Activated CD4-positive, alpha-beta memory T cell treated with anti-CD3 and anti-CD28 coated beads, Interleukin-2, amount 10 ng/mL, durations not matched to agents 7 days and 5 days (primary cell): ENCODE measurements at regions of chr5 and their contacts with region 1.

Region 1: DNA sequence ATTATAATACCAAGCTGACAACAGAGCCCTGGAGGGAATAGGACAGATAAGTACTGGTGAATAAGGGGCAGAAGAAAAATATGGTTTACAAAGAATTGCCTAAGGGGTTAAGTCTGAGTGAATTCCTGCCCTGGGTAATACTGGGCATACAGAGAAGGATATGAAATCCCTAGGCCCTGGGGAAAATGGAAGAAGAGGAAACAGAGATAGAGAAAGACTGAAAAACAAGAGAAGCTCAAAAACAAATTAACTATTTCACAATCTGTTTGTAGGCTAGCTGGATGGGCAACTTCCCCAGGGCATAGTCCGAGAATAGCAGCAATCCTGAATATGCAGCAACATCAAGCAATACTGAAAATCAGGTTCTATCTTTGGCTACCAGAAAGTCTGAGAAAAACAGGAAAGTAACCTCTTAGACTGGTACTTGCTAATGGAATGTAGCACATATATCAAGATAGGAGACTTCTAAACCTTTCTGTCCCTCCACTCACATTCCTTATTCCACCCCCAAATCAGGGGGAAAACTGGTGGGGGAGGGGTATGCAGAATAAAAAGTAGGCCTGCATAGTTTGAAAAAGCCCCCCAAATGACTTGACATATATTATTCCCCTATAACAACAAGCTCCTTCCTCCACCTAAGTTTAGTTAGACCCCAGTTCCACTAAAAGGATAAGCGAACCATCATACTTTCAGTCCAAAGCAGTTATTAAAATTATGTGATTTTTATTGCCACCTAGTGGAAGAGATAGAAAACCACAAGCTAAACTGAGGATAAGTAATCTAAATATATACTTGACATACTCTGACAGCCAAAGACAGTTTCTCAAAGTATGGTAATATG is 20.6 kb downstream of the SLC38A9 start:
- DNase-seq: no peak
- H3K4me3 Mint-ChIP-seq: no peak overlapping the region
- H3K27ac Mint-ChIP-seq: no peak overlapping the region
- H3K4me1 Mint-ChIP-seq: peaks cover 2% of the 10 kb centered on the region
- H3K27me3 Mint-ChIP-seq: no peaks in the 10 kb centered on the region

Region 2: DNA sequence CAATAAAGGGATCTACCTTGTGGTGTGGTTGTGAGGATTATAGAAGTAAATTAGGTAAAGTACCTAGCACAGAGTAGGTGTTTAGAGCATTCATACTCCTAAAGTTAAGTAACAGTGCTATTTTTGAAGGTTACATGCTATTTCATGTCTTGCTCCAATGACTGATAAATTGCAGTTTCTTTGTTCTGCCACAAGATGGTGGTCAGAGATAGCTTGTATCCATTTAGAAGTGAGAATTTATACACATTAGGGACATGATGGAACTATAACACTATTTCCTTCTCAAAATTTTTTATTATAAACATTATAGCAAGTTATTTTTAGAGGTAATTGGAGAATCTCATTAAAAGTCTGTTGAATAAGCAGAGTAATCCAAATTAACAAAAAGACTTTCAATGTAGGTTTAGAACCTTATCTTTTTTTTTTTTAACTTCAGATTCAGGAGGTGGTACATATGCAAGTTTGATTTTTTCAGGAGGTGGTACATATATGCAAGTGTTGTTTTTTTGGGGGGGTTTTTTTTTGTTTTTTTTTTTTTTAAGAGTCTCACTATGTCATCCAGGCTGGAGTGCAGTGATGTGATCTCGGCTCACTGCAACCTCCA is 366.6 kb before region 1 on chr5:
- CTCF ChIA-PET with region 1: interaction called, 11 read pairs
- POLR2A ChIA-PET with region 1: no interaction called
- DNase-seq: no peak
- H3K4me3 Mint-ChIP-seq: no peak overlapping the region
- H3K27ac Mint-ChIP-seq: peak overlapping the region; percentile 17
- H3K4me1 Mint-ChIP-seq: peaks cover 18% of the 10 kb centered on the region
- H3K27me3 Mint-ChIP-seq: no peaks in the 10 kb centered on the region

Region 3: GRCh38 chr5:55344392-55344992 is 347.0 kb before region 1 on chr5:
- CTCF ChIA-PET with region 1: interaction called, 18 read pairs
- POLR2A ChIA-PET with region 1: no interaction called
- DNase-seq: peak; percentile 69
- H3K4me3 Mint-ChIP-seq: no peak overlapping the region
- H3K27ac Mint-ChIP-seq: peak overlapping the region; percentile 32
- H3K4me1 Mint-ChIP-seq: peaks cover 6% of the 10 kb centered on the region
- H3K27me3 Mint-ChIP-seq: no peaks in the 10 kb centered on the region

Region 4: DNA sequence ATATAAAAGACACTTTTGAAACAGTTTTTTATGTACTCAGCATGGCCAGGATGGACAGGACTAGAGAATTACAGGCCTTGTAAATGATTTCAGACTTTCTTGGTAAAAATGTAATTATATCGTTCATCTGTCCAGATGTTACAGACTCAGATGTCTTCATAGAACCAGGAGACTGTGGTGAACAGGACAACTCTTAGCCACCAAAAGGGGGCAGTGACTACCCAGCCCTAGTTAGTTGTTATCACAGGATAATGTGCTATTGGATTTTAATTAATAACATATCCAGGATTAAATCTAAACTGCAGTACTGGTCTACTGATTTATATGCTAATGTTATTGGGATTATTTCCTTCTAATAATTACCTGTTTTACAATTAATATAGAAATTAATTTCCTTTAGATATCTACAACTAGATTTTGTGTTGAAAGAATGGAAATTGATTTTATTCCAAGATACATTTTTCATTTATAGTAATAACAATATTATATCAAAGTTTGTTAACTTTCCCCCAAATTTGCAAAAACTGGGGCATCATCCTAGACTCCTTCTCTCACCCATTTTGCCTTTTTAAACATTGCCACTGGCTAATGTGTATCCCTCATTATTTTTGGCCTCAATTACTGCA is 284.3 kb before region 1 on chr5:
- CTCF ChIA-PET with region 1: interaction called, 12 read pairs
- POLR2A ChIA-PET with region 1: no interaction called
- DNase-seq: no peak
- H3K4me3 Mint-ChIP-seq: no peak overlapping the region
- H3K27ac Mint-ChIP-seq: no peak overlapping the region
- H3K4me1 Mint-ChIP-seq: peaks cover 2% of the 10 kb centered on the region
- H3K27me3 Mint-ChIP-seq: no peaks in the 10 kb centered on the region